ENCODE measurements at regions of chr17 and their contacts with region 1.

Region 1: DNA sequence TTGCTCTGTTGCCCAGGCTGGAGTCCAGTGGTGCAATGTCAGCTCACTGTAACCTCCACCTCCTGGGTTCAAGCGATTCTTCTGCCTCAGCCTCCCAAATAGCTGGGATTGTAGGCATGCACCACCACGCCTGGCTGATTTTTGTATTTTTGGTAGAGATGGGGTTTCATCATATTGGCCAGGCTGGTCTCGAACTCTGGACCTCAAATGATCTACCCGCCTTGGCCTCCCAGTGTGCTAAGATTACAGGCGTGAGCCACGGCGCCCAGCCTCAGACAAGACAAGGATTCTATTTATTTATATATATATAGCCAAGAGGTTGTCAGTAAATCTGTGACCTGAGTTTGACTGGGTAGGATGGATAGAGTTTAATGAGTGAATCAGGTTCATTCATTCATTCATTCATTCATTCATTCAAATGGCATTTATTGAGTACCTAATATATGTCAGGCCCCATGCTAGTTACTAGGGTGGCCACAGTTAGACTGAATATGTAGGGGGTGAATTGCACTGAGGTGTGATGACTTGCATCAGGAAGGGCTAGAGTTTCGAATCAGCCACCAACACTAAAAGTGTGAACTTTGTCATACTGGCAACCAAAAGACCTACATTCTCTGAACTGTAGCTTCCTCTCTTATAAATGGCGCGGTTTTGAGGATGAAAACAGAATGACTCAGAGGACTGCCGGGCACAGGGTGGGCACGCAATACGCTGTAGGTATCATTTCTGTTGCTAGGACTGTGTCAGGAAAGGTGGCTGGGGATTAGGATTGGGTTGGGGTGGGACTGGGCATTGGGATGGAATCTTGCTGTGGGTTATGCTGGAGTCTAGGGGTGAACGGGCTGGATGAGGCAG is 37.8 kb downstream of the ITGAE start:
- DNase-seq: peak; percentile 57 to 77
- ATAC-seq: peak; percentile 65 to 83 (median 72)
- H3K4me3 ChIP-seq: peak overlapping the region; percentile 38
- H3K4me3 Mint-ChIP-seq: peak overlapping the region; percentile 92
- H3K27ac ChIP-seq: peak overlapping the region; percentile 91
- H3K27ac Mint-ChIP-seq: peak overlapping the region; percentile 94 to 99
- H3K4me1 ChIP-seq: peaks cover 74% of the 10 kb centered on the region
- H3K4me1 Mint-ChIP-seq: peaks cover 53 to 68% of the 10 kb centered on the region in 2 donors
- H3K27me3 ChIP-seq: no peaks in the 10 kb centered on the region
- H3K27me3 Mint-ChIP-seq: no peaks in the 10 kb centered on the region
- CTCF ChIP-seq: no peak

Region 2: DNA sequence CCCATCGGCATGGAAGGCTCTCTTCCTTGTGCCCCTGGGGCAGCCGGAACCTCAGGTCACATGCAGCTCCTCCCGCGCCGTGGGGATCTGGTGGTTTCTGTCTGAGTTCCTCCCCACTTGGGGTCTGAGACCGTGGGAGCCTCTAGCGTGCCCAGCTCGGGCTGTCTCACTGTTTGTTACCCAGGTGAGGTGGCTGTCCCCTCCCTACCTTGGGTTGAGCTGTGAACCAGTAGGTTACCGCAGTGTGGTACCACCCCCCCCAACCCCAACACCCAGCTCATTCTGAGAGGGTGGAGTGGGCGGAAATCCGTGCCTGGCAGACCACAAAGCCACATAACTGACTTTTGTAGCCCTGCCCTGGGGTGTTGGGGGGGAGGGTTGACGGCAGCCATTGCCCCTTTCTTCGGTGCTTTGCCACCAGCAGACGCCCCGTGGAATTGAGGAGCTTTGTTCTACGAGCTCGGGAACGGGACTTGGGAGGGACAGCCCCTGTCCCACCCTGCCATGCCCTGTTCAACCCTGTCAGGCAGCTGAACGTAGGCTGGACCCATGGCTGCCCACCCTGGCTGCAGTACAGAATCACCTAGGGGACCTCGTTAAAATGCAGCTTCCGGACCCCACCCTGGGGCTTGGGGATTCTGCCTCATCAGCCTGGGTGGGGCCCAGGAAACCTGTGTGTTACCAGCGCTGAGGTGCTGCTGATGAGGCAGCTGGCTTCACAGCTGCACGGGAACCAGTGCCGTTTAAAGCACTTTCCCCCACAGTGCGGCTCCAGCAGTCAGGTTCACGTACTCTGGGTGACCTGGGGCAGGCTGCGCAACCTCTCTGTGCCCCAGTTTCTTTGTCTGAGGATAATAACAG is 948.4 kb before region 1 on chr17:
- intact Hi-C with region 1: loop called (anchors 2 kb)
- DNase-seq: peak; percentile 91 to 98
- ATAC-seq: peak; percentile 65 to 87 (median 77)
- H3K4me3 ChIP-seq: peak overlapping the region; percentile 42
- H3K4me3 Mint-ChIP-seq: peak overlapping the region; percentile 72
- H3K27ac ChIP-seq: peak overlapping the region; percentile 79
- H3K27ac Mint-ChIP-seq: peak overlapping the region; percentile 89 to 92
- H3K4me1 ChIP-seq: peaks cover 79% of the 10 kb centered on the region
- H3K4me1 Mint-ChIP-seq: peaks cover 46 to 64% of the 10 kb centered on the region in 2 donors
- H3K27me3 ChIP-seq: no peaks in the 10 kb centered on the region
- H3K27me3 Mint-ChIP-seq: no peaks in the 10 kb centered on the region
- CTCF ChIP-seq: no peak

Region 3: DNA sequence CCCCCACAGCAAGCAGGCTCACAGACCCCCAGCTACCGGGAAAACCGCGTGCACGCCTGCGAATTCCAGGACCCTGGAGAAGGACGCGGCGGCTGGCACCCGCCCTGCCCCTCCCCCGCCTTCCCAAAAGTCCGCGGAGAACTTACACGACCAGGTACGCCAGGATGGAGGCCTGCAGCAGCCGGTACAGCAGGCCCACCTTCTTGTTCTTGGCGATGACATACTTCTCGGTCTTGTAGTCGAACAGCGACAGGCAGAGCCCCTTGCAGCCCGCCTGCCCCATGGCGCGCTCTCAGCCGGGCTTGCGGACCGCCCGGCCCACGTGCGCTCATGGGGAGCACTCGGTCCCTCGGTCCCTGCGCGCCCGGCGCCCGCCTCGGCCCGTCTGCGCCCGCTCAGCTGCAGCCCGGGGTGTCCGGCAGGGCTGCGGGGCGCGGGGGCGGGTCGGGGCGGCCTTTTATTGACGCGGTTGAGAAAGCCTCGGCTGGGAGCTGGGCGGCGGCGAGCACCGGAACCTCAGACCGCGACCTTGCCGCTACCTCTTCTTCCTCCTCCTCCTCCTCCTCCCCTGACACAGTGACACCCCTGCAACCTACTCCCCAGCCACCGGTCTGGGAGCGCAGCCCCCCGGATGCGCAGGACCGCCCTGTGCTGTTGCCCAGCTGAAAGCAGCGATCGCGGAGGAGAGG is 67.3 kb before region 1 on chr17 and contains the start of gene P2RX5:
- intact Hi-C with region 1: loop called (anchors 5 kb)
- DNase-seq: peak; percentile 29 to 63
- ATAC-seq: peak; percentile 46 to 61 (median 52)
- H3K4me3 ChIP-seq: peak within 1 kb of the TSS; percentile 60
- H3K4me3 Mint-ChIP-seq: peak within 1 kb of the TSS; percentile 80
- H3K27ac ChIP-seq: peak within 1 kb of the TSS; percentile 52
- H3K27ac Mint-ChIP-seq: peak within 1 kb of the TSS in 1 of 2 donors; percentile 79
- H3K4me1 ChIP-seq: peaks cover 52% of the 10 kb centered on the region
- H3K4me1 Mint-ChIP-seq: peaks cover 12 to 36% of the 10 kb centered on the region in 2 donors
- H3K27me3 ChIP-seq: peaks cover 3% of the 10 kb centered on the region
- H3K27me3 Mint-ChIP-seq: peaks cover 0 to 5% of the 10 kb centered on the region in 2 donors
- CTCF ChIP-seq: no peak
- total RNA-seq, gene P2RX5: 7.8 to 15.4 (median 9.2) TPM

Region 4: DNA sequence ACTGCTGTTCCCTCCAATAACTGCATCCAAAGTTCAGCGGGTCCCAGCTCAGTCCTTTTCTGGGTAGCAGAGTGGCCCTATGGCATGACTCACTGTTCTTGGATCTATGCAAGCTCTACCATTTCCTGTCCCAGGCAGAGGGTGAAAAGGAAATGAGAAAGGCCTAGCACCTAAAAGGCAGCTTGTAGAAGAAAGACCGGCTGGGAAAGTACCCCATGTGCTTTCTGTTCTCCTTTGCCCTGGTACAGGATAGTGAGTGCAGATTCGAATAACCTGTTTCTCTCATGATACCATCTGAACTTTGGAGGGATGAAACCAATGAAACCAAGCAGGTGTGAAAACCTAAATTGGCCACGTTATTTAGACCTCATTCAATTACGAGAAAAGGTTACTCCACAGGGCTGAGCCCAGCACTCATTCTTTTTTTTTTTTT is 52.2 kb before region 1 on chr17:
- intact Hi-C with region 1: loop called (anchors 1 kb)
- DNase-seq: peak in 1 of 2 donors; percentile 94
- ATAC-seq: peak; percentile 93 to 95 (median 93)
- H3K4me3 ChIP-seq: no peak overlapping the region
- H3K4me3 Mint-ChIP-seq: peak overlapping the region; percentile 67
- H3K27ac ChIP-seq: peak overlapping the region; percentile 44
- H3K27ac Mint-ChIP-seq: peak overlapping the region; percentile 71 to 77
- H3K4me1 ChIP-seq: peaks cover 33% of the 10 kb centered on the region
- H3K4me1 Mint-ChIP-seq: peaks cover 25 to 36% of the 10 kb centered on the region in 2 donors
- H3K27me3 ChIP-seq: no peaks in the 10 kb centered on the region
- H3K27me3 Mint-ChIP-seq: no peaks in the 10 kb centered on the region
- CTCF ChIP-seq: no peak

Region 5: GRCh38 chr17:3738562-3739295 is 24.4 kb before region 1 on chr17:
- intact Hi-C with region 1: loop called (anchors 2 kb)
- DNase-seq: peak in 1 of 2 donors; percentile 79
- ATAC-seq: peak; percentile 38 to 63 (median 59)
- H3K4me3 ChIP-seq: no peak overlapping the region
- H3K4me3 Mint-ChIP-seq: no peak overlapping the region
- H3K27ac ChIP-seq: no peak overlapping the region
- H3K27ac Mint-ChIP-seq: peak overlapping the region; percentile 34 to 75
- H3K4me1 ChIP-seq: peaks cover 41% of the 10 kb centered on the region
- H3K4me1 Mint-ChIP-seq: peaks cover 26 to 36% of the 10 kb centered on the region in 2 donors
- H3K27me3 ChIP-seq: no peaks in the 10 kb centered on the region
- H3K27me3 Mint-ChIP-seq: no peaks in the 10 kb centered on the region
- CTCF ChIP-seq: no peak

Region 6: GRCh38 chr17:3796110-3796821 is 33.1 kb after region 1 on chr17:
- intact Hi-C with region 1: loop called (anchors 1 kb)
- DNase-seq: peak; percentile 83 to 91
- ATAC-seq: peak; percentile 66 to 88 (median 81)
- H3K4me3 ChIP-seq: no peak overlapping the region
- H3K4me3 Mint-ChIP-seq: peak overlapping the region; percentile 77
- H3K27ac ChIP-seq: peak overlapping the region; percentile 24
- H3K27ac Mint-ChIP-seq: peak overlapping the region; percentile 84 to 89
- H3K4me1 ChIP-seq: peaks cover 68% of the 10 kb centered on the region
- H3K4me1 Mint-ChIP-seq: peaks cover 45 to 54% of the 10 kb centered on the region in 2 donors
- H3K27me3 ChIP-seq: no peaks in the 10 kb centered on the region
- H3K27me3 Mint-ChIP-seq: peaks cover 0 to 12% of the 10 kb centered on the region in 2 donors
- CTCF ChIP-seq: no peak

Measured in natural killer cell (primary cell).